Caco-2 (cell line): ENCODE measurements at regions of chr20 and their contacts with region 1.

Region 1: GRCh38 chr20:38645980-38646858 is 44.6 kb downstream of the ARHGAP40 start:
- DNase-seq: peak; percentile 85 to 97
- H3K4me3 ChIP-seq: peak overlapping the region; percentile 28
- H3K4me3 Mint-ChIP-seq: peak overlapping the region; percentile 69
- H3K27ac Mint-ChIP-seq: no peak overlapping the region
- H3K4me1 ChIP-seq: 0 out of 2 replicates have a peak, but pooled peaks cover 8% of the 10 kb centered on the region
- H3K4me1 Mint-ChIP-seq: no peaks in the 10 kb centered on the region
- H3K27me3 ChIP-seq: peaks cover 2% of the 10 kb centered on the region; the same call in 1 of the 2 replicates
- H3K27me3 Mint-ChIP-seq: peaks cover 19% of the 10 kb centered on the region
- CTCF ChIP-seq: peak; percentile 100

Region 2: DNA sequence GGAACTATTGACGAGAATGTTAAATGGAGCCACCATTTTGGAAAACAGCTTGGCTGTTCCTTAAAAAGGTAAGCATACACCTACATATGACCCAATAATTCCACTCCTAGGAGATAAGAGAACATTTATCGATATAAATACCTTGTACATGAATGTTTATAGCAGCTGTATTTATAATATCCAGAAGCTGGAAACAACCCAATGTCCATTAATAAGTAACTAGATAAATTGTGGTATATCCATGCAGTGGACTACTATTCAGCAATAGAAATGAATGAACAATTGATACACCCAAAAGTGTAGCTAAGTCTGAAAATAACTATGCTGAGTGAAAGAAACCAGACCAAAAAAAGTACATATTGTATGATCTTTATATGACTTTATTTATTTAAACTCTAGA is 107.4 kb before region 1 on chr20:
- CTCF ChIA-PET with region 1: no interaction called
- POLR2A ChIA-PET with region 1: no interaction called
- intact Hi-C with region 1: no loop called
- DNase-seq: no peak
- H3K4me3 ChIP-seq: no peak overlapping the region
- H3K4me3 Mint-ChIP-seq: no peak overlapping the region
- H3K27ac Mint-ChIP-seq: no peak overlapping the region
- H3K4me1 ChIP-seq: no peaks in the 10 kb centered on the region
- H3K4me1 Mint-ChIP-seq: no peaks in the 10 kb centered on the region
- H3K27me3 ChIP-seq: no peaks in the 10 kb centered on the region
- H3K27me3 Mint-ChIP-seq: no peaks in the 10 kb centered on the region
- CTCF ChIP-seq: no peak

Region 3: GRCh38 chr20:38658879-38659596 is 12.8 kb after region 1 on chr20:
- CTCF ChIA-PET with region 1: interaction called, 27 read pairs
- POLR2A ChIA-PET with region 1: no interaction called
- intact Hi-C with region 1: no loop called
- DNase-seq: peak; percentile 72 to 79
- H3K4me3 ChIP-seq: no peak overlapping the region
- H3K4me3 Mint-ChIP-seq: no peak overlapping the region
- H3K27ac Mint-ChIP-seq: no peak overlapping the region
- H3K4me1 ChIP-seq: no peaks in the 10 kb centered on the region
- H3K4me1 Mint-ChIP-seq: no peaks in the 10 kb centered on the region
- H3K27me3 ChIP-seq: peaks cover 5% of the 10 kb centered on the region; the same call in 1 of the 2 replicates
- H3K27me3 Mint-ChIP-seq: peaks cover 34% of the 10 kb centered on the region
- CTCF ChIP-seq: peak; percentile 95 to 98

Region 4: DNA sequence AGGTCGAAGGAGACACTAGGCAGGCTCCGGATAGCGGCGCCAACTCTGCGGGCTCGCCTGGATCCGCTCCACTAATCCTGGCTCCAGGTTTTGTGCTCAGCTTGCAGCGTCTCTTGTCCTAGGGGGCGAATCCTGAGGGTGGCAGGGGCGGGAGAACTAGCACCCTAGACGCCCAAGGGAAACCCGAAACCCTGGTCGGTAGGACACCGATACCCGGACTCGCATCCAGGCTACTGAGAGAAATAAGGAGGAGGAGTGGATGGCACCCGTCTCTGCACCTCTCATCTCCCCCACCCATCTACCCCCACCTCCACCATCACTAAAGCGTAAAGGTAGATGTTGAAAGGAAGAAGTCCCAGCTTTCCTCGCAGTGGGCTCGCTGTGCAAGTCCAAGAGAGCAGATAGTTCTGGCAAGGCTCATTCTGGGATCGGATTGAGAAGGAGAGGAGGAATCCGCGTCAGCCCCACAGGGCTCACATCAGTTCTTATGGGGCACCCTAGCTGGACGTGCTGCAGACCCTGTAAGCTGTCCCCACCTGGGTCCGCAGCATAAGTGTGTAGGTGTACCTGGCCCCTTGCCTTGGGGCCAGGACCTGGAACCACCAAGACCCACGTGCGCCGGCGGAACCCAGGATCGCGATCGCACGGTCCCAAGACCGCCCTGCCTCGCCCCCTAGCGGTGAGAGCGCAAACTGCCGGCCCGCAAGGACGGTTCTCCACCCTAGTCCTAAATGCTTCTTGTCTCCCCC is 84.9 kb after region 1 on chr20:
- CTCF ChIA-PET with region 1: interaction called, 3 read pairs
- POLR2A ChIA-PET with region 1: no interaction called
- intact Hi-C with region 1: loop called (anchors 1 kb)
- DNase-seq: peak; percentile 91 to 93
- H3K4me3 ChIP-seq: peak overlapping the region; percentile 24
- H3K4me3 Mint-ChIP-seq: peak overlapping the region; percentile 69
- H3K27ac Mint-ChIP-seq: no peak overlapping the region
- H3K4me1 ChIP-seq: peaks cover 17% of the 10 kb centered on the region
- H3K4me1 Mint-ChIP-seq: peaks cover 12% of the 10 kb centered on the region
- H3K27me3 ChIP-seq: peaks cover 9% of the 10 kb centered on the region
- H3K27me3 Mint-ChIP-seq: peaks cover 66% of the 10 kb centered on the region
- CTCF ChIP-seq: peak; percentile 100

Region 5: DNA sequence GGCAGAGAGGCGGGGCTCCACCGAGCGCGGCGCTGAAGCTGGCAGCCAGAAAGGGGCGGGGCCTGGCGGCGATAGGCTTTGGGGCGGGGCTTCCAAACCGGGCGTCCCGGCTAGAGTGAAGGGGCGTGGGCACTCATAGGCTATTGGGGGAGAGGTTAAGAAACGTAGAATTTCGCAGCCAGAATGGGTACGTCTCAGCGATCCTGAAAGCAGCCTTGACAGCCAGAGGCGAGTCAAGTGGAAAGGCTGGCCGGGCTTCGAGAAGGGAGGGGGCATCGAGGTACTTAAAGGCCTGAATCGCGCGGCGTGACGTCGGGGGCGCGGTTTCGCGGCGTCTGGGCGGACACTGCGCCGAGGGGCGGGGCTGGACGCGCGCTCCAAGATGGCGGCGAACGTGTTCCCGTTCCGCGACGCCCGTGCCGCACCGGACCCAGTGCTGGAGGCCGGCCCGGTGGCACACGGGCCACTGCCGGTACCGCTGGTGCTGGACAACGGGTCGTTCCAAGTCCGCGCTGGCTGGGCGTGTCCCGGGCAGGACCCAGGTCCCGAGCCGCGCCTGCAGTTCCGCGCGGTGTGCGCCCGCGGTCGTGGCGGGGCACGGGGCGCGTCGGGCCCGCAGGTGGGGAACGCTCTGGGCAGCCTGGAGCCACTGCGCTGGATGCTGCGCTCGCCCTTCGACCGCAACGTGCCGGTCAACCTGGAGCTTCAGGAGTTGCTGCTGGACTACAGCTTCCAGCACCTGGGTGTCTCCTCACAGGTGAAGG is 102.1 kb after region 1 on chr20 and contains the start of gene ACTR5:
- CTCF ChIA-PET with region 1: interaction called, 11 read pairs
- POLR2A ChIA-PET with region 1: interaction called, 3 read pairs
- intact Hi-C with region 1: loop called (anchors 1 kb)
- DNase-seq: peak; percentile 99 to 100
- H3K4me3 ChIP-seq: peak within 1 kb of the TSS; percentile 57
- H3K4me3 Mint-ChIP-seq: peak within 1 kb of the TSS; percentile 81
- H3K27ac Mint-ChIP-seq: peak within 1 kb of the TSS; percentile 85
- H3K4me1 ChIP-seq: peaks cover 14% of the 10 kb centered on the region
- H3K4me1 Mint-ChIP-seq: peaks cover 10% of the 10 kb centered on the region
- H3K27me3 ChIP-seq: no peaks in the 10 kb centered on the region
- H3K27me3 Mint-ChIP-seq: no peaks in the 10 kb centered on the region
- CTCF ChIP-seq: no peak
- total RNA-seq, gene ACTR5: 18.2 and 20.0 TPM in 2 replicates

Region 6: GRCh38 chr20:38790200-38791053 is 144.2 kb after region 1 on chr20:
- CTCF ChIA-PET with region 1: interaction called, 7 read pairs
- POLR2A ChIA-PET with region 1: no interaction called
- intact Hi-C with region 1: loop called (anchors 1 kb)
- DNase-seq: peak; percentile 71 to 73
- H3K4me3 ChIP-seq: no peak overlapping the region
- H3K4me3 Mint-ChIP-seq: peak overlapping the region; percentile 40
- H3K27ac Mint-ChIP-seq: no peak overlapping the region
- H3K4me1 ChIP-seq: no peaks in the 10 kb centered on the region
- H3K4me1 Mint-ChIP-seq: peaks cover 7% of the 10 kb centered on the region
- H3K27me3 ChIP-seq: no peaks in the 10 kb centered on the region; the same call in 1 of the 2 replicates
- H3K27me3 Mint-ChIP-seq: peaks cover 2% of the 10 kb centered on the region
- CTCF ChIP-seq: peak; percentile 94 to 96

Region 7: DNA sequence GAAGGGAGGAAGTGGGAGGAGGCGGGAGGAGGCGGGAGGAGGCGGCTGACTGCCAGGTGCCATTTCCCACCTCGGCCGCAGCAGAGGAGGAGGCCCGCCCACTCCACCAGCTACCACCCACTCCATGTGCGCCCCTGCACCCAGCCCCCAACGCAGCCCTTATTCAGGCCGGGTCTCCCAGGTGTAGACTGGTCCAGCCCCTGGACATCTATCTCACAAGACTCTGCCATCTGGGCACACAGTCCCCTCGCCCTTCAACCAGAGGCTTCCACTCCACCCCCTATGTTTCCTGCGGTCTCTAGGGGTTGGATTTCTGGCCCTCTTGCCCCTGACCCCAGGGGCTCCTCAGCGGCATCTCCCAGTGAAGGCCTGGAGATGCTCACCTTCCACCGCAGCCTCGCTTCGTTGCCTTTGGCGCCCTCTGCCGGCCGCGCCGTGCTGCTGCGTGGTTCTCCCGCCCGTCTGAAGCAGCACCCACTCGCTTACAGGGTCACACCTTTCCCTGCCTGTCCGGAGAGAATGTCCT is 247.4 kb after region 1 on chr20:
- CTCF ChIA-PET with region 1: interaction called, 3 read pairs
- POLR2A ChIA-PET with region 1: no interaction called
- intact Hi-C with region 1: loop called (anchors 1 kb)
- DNase-seq: peak; percentile 84 to 91
- H3K4me3 ChIP-seq: peak overlapping the region; percentile 27
- H3K4me3 Mint-ChIP-seq: peak overlapping the region; percentile 60
- H3K27ac Mint-ChIP-seq: no peak overlapping the region
- H3K4me1 ChIP-seq: peaks cover 3% of the 10 kb centered on the region; the same call in 1 of the 2 replicates
- H3K4me1 Mint-ChIP-seq: peaks cover 17% of the 10 kb centered on the region
- H3K27me3 ChIP-seq: no peaks in the 10 kb centered on the region; the same call in 1 of the 2 replicates
- H3K27me3 Mint-ChIP-seq: peaks cover 6% of the 10 kb centered on the region
- CTCF ChIP-seq: peak; percentile 100